HepG2 (cell line): ENCODE measurements at regions of chr7 and their contacts with region 1.

Region 1: DNA sequence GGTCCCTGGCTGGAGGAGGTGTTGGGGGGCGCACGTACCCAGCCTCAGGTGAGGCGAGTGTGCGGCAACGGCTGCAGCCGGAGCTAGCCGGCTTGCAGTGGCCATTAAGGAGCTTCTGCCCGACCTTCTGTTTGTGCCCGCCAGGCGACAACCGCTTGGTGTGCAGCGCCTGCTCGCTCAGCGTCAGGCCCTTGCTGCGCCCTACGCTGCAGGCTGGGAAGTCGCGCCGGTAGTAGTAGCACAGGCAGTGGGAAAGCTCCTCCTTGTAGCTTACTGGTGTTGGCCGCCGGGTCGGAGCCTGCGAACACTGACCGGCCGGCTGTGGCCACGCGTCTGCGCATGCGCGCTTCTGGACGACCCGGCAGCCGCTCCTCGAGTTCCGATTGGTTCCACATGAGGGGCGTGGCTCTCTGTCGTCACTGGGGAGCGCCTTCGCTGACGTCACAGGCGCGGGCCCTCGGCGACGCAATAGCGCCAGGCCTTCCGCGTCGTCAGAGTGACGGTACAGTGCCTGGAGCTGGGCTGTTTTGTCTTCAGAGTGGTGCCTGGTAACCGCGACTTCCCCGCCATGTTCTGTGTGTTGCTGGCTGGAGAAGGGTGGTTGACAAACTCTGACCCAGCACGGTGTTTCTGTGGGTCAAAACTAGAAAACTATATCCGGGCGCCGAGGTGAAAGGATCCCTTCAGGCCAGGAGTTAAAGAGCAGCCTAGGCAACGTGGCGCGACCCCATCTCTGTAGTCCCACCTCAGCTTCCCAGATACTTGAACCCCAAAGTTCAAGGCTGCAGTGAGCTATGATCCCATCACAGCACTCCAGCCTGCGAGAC is 76.3 kb upstream of the TMEM248 start:
- DNase-seq: peak; percentile 93
- ATAC-seq: peak; percentile 94
- H3K4me3 ChIP-seq: peak overlapping the region; percentile 79 to 94 (median 89)
- H3K27ac ChIP-seq: peak overlapping the region; percentile 93
- H3K4me1 ChIP-seq: peaks cover 40% of the 10 kb centered on the region
- H3K27me3 ChIP-seq: no peaks in the 10 kb centered on the region
- CTCF ChIP-seq: 0 out of 2 replicates have a peak, but pooled peaks have one; percentile 41
- EP300 ChIP-seq: no peak
- POLR2A ChIP-seq: peak; percentile 82 to 90
- RAD21 ChIP-seq: peak; percentile 59

Region 2: DNA sequence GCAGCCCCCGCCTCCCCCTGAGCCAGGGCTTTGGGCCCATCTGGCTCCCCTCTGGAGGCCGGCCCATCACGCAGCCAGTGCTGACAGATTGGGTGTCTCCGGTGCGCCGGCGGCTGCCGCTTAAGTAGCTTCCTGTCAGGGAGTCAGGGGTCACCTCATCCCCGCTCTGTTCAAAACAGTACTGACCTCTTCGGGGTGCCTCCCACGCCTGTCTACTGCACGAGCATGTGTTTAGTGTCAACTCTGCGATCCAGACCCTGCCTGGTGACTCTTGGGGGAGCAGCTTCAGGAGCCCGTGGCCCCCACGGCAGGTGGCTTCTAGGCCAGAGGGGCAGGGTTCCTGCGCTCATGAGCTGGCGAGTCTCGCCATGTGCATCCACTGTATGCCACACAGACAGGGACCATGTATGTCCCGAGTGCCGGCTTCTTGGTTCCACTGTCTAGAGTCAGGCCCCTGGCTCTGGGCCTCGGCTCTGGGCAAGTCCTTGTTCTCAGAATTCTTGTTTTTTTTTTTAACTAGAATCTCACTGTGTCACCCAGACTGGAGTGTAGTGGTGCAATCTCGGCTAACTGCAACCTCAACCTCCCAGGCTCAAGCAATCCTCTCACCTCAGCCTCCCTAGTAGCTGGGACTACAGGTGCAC is 180.0 kb before region 1 on chr7:
- CTCF ChIA-PET with region 1: no interaction called
- POLR2A ChIA-PET with region 1: no interaction called
- in situ Hi-C with region 1: no loop called
- intact Hi-C with region 1: no loop called
- DNase-seq: no peak
- ATAC-seq: no peak
- H3K4me3 ChIP-seq: no peak overlapping the region
- H3K27ac ChIP-seq: no peak overlapping the region
- H3K4me1 ChIP-seq: peaks cover 29% of the 10 kb centered on the region
- H3K27me3 ChIP-seq: no peaks in the 10 kb centered on the region
- CTCF ChIP-seq: no peak
- EP300 ChIP-seq: no peak
- POLR2A ChIP-seq: no peak
- RAD21 ChIP-seq: no peak

Region 3: GRCh38 chr7:66920769-66921395 is 76.1 kb after region 1 on chr7 and contains the start of gene TMEM248:
- CTCF ChIA-PET with region 1: no interaction called
- POLR2A ChIA-PET with region 1: interaction called, 10 read pairs
- in situ Hi-C with region 1: no loop called
- intact Hi-C with region 1: no loop called
- DNase-seq: peak; percentile 69
- ATAC-seq: peak; percentile 89
- H3K4me3 ChIP-seq: peak within 1 kb of the TSS; percentile 74 to 98 (median 88)
- H3K27ac ChIP-seq: peak within 1 kb of the TSS; percentile 52
- H3K4me1 ChIP-seq: peaks cover 40% of the 10 kb centered on the region
- H3K27me3 ChIP-seq: no peaks in the 10 kb centered on the region; a peak in 1 of 5 replicates
- CTCF ChIP-seq: no peak; the same call in 1 of the 2 replicates
- EP300 ChIP-seq: no peak
- POLR2A ChIP-seq: peak; percentile 80 to 96
- RAD21 ChIP-seq: peak; percentile 14; the same call in 1 of the 2 replicates
- total RNA-seq, gene TMEM248: 34.7 and 54.3 TPM in 2 replicates

Region 4: DNA sequence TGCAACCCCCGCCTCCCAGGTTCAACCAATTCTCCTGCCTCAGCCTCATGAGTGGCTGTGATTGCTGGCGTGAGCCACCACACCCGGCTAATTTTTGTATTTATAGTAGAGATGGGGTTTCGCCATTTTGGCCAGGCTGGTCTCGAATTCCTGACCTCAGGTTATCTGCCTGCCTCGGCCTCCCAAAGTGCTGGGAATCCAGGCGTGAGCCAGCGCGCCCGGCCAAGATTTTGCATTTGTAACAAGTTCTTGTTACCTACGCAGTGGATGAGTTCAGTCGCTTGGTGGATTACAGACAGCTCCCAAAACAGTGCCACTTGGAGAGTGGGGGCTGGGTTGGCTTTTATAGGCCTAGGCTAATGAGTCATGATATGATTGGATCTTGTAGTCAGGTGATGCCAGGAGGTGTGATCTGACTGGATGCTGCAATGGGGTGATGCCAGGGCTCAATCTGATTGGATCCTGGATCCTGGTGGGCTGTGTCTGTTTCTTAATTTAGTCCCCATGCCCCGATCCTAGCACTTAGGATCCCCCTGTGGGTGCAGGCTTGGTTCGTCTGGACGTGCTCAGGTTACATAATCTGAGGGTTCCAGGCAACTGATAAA is 130.3 kb after region 1 on chr7:
- CTCF ChIA-PET with region 1: no interaction called
- POLR2A ChIA-PET with region 1: no interaction called
- in situ Hi-C with region 1: loop called (anchors 25 kb)
- intact Hi-C with region 1: no loop called
- DNase-seq: no peak
- ATAC-seq: no peak
- H3K4me3 ChIP-seq: no peak overlapping the region
- H3K27ac ChIP-seq: no peak overlapping the region
- H3K4me1 ChIP-seq: peaks cover 28% of the 10 kb centered on the region
- H3K27me3 ChIP-seq: 0 out of 5 replicates have a peak, but pooled peaks cover 0 to 1% of the 10 kb centered on the region in 2 experiments
- CTCF ChIP-seq: no peak
- EP300 ChIP-seq: no peak
- POLR2A ChIP-seq: no peak
- RAD21 ChIP-seq: no peak